Mammary epithelial cell (primary cell): ENCODE measurements at regions of chr20 and their contacts with region 1.

Region 1: DNA sequence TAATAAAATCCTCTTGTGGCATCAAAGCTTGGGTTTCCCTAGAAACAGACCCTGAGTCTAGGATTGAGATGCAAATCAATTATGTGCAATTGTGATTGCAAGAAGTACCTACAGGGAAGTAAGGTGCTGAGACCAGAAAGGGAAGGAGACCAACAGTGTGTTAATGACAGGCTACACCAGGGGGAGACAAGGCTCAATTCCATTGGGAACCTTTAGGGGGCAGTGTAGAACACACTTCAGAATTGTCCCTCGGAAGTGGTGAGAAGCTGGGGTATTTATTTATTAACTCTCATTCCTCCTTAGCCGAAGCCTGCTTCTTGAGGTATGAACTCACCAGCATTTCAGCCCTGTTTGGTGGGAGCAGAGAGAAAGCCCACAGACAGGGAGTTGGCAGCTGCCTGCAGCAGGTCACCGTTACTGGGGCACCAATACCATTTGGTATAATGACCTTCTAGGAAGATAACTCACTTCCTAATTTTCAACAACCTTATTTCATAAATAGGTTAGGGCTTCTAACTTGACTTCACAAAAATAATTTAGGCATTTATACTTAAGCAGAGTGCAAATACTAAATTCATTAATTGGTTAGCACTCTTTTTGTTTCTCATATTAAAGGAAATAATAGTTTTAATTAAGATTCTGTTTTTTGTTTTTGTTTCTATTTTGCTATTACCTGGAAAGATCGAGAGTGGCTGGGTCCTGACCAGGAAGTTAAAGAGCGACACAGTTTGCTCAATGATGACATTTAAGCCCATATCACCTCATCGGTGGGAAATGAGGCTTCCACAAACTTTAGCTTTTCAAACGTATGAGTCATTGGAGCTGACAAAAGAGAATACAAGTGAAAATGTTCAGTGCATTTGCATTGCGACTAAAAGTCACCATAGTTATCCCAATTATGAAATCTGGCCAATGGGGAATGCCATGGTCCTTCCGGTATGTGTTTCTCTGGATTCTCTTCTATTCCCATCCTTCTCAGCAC is 94.8 kb downstream of the BTBD3 start:
- DNase-seq: peak; percentile 51
- H3K4me3 ChIP-seq: no peak overlapping the region
- H3K27ac ChIP-seq: no peak overlapping the region
- H3K4me1 ChIP-seq: no peaks in the 10 kb centered on the region
- H3K27me3 ChIP-seq: no peaks in the 10 kb centered on the region
- CTCF ChIP-seq: peak; percentile 99 to 100

Region 2: DNA sequence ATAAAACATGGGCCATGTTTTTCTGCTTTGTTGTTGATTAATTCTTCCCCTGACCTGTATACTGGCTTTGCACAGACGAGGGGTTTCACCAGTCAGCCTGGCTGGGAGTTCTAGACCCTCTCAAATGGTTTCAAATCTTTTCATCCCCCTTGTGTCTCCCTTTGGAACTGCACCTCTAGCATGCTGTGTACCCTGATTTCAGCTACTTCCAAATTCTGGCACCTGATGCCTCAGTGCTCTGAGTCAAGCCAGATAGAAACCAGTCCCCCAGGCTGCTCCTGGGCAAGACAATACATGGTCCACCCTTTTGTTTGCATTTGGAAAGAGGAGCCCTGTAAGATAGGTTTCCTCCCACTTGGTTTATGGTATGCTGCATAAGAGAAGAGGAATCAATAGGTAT is 195.3 kb after region 1 on chr20:
- CTCF ChIA-PET with region 1: interaction called, 6 read pairs
- dilution Hi-C with region 1: no loop called
- in situ Hi-C with region 1: no loop called
- intact Hi-C with region 1: loop called (anchors 1 kb)
- DNase-seq: peak; percentile 47
- H3K4me3 ChIP-seq: no peak overlapping the region
- H3K27ac ChIP-seq: no peak overlapping the region
- H3K4me1 ChIP-seq: no peaks in the 10 kb centered on the region
- H3K27me3 ChIP-seq: peaks cover 1% of the 10 kb centered on the region
- CTCF ChIP-seq: peak; percentile 75 to 84

Region 3: GRCh38 chr20:12358006-12358656 is 345.6 kb after region 1 on chr20:
- CTCF ChIA-PET with region 1: interaction called, 6 read pairs
- dilution Hi-C with region 1: no loop called
- in situ Hi-C with region 1: no loop called
- intact Hi-C with region 1: loop called (anchors 5 kb)
- DNase-seq: peak; percentile 31
- H3K4me3 ChIP-seq: no peak overlapping the region
- H3K27ac ChIP-seq: no peak overlapping the region
- H3K4me1 ChIP-seq: no peaks in the 10 kb centered on the region
- H3K27me3 ChIP-seq: no peaks in the 10 kb centered on the region
- CTCF ChIP-seq: peak; percentile 27 to 61